Posterior vena cava (tissue), 2 donors: ENCODE measurements at regions of chr4 and their contacts with region 1.

Region 1: DNA sequence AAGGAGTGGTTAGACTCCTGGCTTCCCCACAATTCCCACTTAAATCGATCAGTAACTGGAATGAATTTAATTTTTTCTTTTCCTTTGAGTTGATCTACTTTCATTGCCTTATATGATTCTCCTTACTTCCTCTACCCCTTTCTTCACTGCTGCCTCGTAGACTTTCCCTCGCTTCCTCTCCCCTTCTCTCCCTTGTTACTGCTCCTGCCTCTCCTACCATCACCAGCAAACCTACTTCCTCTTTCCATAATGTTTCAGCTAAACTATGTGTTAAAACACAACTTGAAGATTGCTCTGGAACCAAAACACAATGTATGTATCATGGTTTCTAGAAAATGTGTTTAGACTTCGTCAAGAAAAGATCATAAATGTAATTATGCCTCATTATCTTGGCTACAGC is 132.0 kb upstream of the TET2 start:
- DNase-seq: no peak

Region 2: DNA sequence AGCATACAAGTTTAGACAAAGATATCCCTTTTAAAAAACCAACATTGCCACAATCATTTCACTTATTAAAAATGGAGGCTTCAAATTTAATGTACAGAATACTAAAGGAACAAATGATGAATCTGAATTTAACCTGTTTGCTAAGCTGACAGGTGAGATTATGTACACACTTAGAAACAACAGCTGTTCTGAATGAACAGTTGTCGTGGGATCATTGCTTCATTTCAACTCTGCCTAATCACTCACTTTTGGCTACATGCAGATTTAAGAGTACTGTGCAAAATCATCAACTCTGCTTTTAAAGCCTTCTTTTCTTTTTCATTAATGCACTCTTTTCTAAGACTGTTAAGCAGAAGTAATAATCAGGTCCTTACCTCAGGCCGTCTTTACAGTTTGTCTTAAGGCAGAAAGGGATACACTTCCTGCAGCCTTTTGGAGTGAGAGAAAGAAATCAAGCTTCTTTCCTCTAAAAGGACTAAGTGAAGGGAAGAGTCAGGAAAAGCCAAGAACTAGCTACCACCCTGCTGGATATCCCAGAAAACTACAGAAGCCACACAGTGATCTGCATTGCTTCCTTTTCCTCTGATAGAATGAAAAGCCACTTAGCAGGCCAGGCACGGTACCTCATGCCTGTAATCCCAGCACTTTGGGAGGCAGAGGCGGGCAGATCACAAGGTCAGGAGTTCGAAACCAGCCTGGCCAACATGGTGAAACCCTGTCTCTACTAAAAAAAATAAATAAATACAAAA is 826.0 kb after region 1 on chr4:
- intact Hi-C with region 1: loop called in 1 of 2 experiments (anchors 10 kb)
- DNase-seq: no peak